HCT116 (cell line): ENCODE measurements at regions of chr15 and their contacts with region 1.

Region 1: DNA sequence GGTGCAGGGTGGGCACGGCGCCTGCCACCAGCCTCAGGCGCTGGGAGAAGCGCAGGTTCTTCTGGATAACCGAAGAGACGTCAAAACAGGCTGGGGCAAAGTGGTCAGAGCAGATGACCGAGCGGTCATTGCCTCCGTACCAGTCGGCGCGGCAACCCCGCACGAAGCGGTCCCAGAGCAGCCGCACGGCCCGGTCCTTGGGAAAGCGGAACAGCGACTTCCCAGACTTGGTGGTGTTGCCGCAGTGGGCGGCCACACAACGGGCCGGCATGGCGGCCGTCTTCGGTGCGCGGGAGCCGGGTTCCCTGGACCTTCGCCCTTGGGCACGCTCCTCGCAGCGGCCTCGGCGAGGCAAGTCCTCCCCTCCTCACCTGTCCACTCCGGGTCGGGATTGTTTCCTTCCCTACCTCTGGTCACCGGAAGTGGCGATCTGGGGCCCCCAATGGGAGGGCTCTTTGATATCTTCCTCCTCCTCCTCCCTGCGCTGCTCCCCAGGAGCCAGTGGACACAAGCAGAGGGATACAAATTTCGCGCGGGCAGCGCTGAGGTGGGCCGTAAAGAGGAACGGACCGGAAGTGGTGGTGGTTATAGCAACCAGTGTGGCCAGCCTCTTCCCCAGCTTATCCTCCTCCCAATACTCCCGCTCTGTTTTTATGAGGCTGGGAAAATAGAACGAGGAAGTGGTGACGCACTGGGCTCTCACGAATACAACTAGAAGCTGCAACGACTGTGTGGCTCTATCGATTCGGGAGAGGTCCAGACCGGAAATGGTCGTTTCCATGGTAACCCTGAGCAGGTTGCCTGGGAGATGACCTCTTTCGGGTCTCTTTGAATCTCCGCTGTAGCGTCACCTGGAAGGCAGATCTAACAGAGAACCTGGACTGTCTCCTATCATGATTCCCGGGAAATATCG is at the starts of genes LRRC49 and THAP10:
- DNase-seq: peak; percentile 88
- ATAC-seq: peak; percentile 96
- H3K4me3 ChIP-seq: peak within 1 kb of the TSS; percentile 77 to 85
- H3K27ac ChIP-seq: peak within 1 kb of the TSS; percentile 70
- H3K4me1 ChIP-seq: peaks cover 12 to 21% of the 10 kb centered on the region in 2 experiments
- H3K27me3 ChIP-seq: no peaks in the 10 kb centered on the region
- CTCF ChIP-seq: no peak
- POLR2A ChIP-seq: no peak
- RAD21 ChIP-seq: no peak
- total RNA-seq, gene LRRC49: 7.4 TPM
- total RNA-seq, gene THAP10: 2.8 TPM

Region 2: DNA sequence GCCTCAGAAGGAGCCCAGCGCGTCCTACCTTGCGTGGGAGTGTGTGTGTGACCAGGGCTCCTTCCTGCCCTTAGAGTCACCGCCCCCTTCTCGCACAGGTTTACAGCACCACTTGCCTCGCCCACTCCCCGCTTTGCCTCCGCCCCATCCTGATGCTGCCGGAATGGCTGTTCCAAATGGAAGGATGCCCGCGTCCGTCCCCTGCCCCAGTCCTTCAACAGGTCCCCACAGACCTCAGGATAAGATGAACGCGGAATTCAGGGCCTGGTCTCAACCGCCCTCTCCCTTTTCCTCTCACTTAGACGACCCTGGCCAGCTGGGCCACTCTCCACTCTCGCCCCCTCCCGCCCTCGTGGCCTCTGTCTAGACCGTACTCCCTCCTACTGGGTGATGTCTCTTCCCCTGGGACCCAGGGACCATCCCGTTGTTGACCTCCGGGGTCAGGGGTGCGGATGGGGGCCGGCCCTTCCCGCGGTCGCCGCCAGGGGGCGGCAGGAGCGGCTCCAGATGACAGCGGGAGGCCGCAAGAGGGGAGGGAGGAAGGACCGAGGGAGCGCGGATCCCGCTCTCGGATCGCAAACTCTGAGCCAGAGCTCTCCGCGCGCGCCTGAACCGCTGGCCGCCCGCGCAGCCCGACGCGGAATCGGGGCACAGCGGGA is 222.8 kb after region 1 on chr15 and contains the start of gene THSD4:
- CTCF ChIA-PET with region 1: no interaction called
- POLR2A ChIA-PET with region 1: no interaction called
- RAD21 ChIA-PET with region 1: no interaction called
- intact Hi-C with region 1: loop called (anchors 10 kb)
- DNase-seq: no peak
- ATAC-seq: peak; percentile 79
- H3K4me3 ChIP-seq: peak within 1 kb of the TSS; percentile 71 to 72
- H3K27ac ChIP-seq: peak within 1 kb of the TSS; percentile 84
- H3K4me1 ChIP-seq: peaks cover 21 to 31% of the 10 kb centered on the region in 2 experiments
- H3K27me3 ChIP-seq: no peaks in the 10 kb centered on the region
- CTCF ChIP-seq: peak; percentile 64 to 98 (median 97)
- POLR2A ChIP-seq: no peak
- RAD21 ChIP-seq: peak; percentile 66
- total RNA-seq, gene THSD4: 30.5 TPM